BJ (cell line): ENCODE measurements at regions of chr20 and their contacts with region 1.

Region 1: GRCh38 chr20:35619196-35620095 is 3.8 kb downstream of the SPAG4 start:
- DNase-seq: no peak
- H3K4me3 ChIP-seq: peak overlapping the region; percentile 57
- H3K27me3 ChIP-seq: no peaks in the 10 kb centered on the region
- CTCF ChIP-seq: peak; percentile 63

Region 2: DNA sequence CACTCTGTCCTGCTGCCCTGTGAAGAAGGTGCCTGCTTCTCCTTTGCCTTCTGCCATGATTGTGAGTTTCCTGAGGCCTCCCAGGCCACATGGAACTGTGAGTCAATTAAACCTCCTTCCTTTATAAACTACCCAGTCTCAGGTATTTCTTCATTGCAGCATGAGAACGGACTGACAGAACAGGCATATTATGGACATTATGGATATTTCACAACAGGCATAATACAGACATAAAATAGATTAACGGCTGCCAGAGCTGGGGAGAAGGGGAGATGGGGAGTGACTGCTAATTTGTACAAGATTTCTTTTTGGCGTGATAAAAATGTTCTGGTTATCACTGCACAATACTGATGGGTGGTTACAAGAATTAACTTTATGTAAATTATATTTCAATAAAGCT is 556.3 kb before region 1 on chr20:
- CTCF ChIA-PET with region 1: no interaction called
- POLR2A ChIA-PET with region 1: no interaction called
- DNase-seq: no peak
- H3K4me3 ChIP-seq: no peak overlapping the region
- H3K27me3 ChIP-seq: no peaks in the 10 kb centered on the region
- CTCF ChIP-seq: no peak

Region 3: GRCh38 chr20:35604449-35604747 is 15.0 kb before region 1 on chr20:
- CTCF ChIA-PET with region 1: interaction called, 12 read pairs
- POLR2A ChIA-PET with region 1: interaction called, 8 read pairs
- DNase-seq: no peak
- H3K4me3 ChIP-seq: no peak overlapping the region
- H3K27me3 ChIP-seq: peaks cover 7% of the 10 kb centered on the region
- CTCF ChIP-seq: peak; percentile 39

Region 4: DNA sequence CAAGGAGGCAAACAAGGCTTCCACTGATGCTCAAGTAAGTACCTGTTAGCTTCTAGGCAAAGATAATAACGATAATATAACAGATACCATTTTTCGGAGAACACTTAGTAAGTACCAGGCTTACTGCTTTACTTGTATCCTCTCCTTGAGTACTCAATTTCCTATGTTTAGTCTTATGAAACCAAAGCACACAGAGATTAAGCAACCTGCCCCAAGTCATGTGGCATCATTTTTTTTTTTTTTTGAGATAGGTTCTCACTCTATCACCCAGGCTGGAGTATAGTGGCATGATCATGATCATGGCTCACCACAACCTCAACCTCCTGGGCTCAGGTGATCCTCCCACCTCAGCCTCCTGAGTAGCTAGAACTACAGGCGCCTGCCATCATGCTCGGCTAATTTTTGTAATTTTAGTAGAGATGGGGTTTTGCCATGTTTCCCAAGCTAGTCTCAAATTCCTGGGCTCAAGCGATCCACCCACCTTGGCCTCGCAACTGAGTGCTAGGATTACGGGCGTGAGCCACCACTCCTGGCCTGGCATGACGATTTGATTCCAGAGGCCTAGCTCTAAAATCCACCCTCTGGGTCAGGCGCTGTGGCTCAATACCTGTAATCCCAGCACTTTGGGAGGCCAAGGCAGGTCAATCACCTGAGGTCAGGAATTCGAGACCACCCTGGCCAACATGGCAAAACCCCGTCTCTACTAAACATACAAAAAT is 10.1 kb after region 1 on chr20:
- CTCF ChIA-PET with region 1: interaction called, 29 read pairs
- POLR2A ChIA-PET with region 1: interaction called, 3 read pairs
- DNase-seq: no peak
- H3K4me3 ChIP-seq: no peak overlapping the region
- H3K27me3 ChIP-seq: no peaks in the 10 kb centered on the region
- CTCF ChIP-seq: no peak

Region 5: GRCh38 chr20:35635652-35636051 is 16.2 kb after region 1 on chr20:
- CTCF ChIA-PET with region 1: interaction called, 29 read pairs
- POLR2A ChIA-PET with region 1: interaction called, 12 read pairs
- DNase-seq: no peak
- H3K4me3 ChIP-seq: no peak overlapping the region
- H3K27me3 ChIP-seq: no peaks in the 10 kb centered on the region
- CTCF ChIP-seq: no peak

Region 6: DNA sequence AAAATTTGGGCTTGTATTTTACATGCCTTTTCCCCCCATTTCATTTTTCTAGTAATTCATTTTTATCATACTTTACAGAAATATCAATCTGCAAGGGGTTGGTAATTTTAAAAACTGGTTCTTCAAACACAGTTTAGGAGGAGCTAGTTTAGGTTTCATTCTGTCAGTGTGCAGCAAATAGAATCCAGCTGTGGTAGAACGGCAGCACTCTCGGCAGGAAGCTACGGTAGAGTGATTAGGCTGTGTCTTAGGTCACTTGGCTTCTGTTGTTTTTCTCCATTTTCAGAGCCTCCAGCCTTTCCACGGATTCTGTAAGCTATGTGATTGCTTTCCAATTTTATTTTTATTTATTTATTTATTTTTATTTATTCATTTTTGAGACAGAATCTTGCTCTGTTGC is 1289.2 kb after region 1 on chr20:
- CTCF ChIA-PET with region 1: no interaction called
- POLR2A ChIA-PET with region 1: interaction called, 11 read pairs
- DNase-seq: no peak
- H3K4me3 ChIP-seq: no peak overlapping the region
- H3K27me3 ChIP-seq: no peaks in the 10 kb centered on the region
- CTCF ChIP-seq: no peak